ENCODE measurements at regions of chr14 and their contacts with region 1.

Region 1: GRCh38 chr14:95442633-95443021 is 73.8 kb downstream of the SYNE3 start:
- DNase-seq: peak; percentile 82
- H3K4me3 ChIP-seq: no peak overlapping the region
- H3K27ac ChIP-seq: no peak overlapping the region
- H3K4me1 ChIP-seq: no peaks in the 10 kb centered on the region
- H3K27me3 ChIP-seq: no peaks in the 10 kb centered on the region
- CTCF ChIP-seq: peak; percentile 90

Region 2: GRCh38 chr14:95413289-95414215 is 29.1 kb before region 1 on chr14:
- CTCF ChIA-PET with region 1: interaction called, 11 read pairs
- POLR2A ChIA-PET with region 1: no interaction called
- intact Hi-C with region 1: no loop called
- DNase-seq: no peak
- H3K4me3 ChIP-seq: no peak overlapping the region
- H3K27ac ChIP-seq: no peak overlapping the region
- H3K4me1 ChIP-seq: no peaks in the 10 kb centered on the region
- H3K27me3 ChIP-seq: no peaks in the 10 kb centered on the region
- CTCF ChIP-seq: no peak

Region 3: DNA sequence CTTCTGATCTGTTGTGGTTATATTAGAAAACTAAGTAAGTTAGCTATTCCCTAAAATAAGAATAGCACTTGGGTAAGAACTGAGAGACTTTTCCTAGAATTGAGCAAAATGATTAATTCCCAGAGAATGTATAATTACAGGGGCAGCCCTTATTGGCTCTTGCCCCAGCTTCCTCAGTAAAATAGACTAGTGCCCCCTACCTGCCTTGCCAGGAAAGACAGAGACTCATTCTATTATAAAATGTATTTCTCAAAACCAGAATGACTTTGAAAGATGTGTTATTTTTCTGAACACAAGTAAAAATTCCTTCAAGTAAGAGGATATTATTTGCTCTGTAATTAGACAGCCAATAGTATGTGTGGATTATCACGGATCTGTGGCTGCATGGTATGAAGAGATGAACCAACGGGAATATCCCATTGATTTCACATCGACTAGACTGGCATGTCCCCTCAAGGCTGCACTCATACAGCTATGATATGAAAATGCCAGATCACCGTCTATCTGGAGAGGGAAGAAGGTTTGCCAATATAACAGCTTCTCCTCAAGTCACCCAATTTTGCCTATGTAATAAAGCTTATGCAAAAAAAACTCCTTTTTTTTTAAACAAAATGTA is 84.9 kb after region 1 on chr14:
- CTCF ChIA-PET with region 1: interaction called, 24 read pairs
- POLR2A ChIA-PET with region 1: no interaction called
- intact Hi-C with region 1: loop called (anchors 2 kb)
- DNase-seq: peak; percentile 68
- H3K4me3 ChIP-seq: no peak overlapping the region
- H3K27ac ChIP-seq: no peak overlapping the region
- H3K4me1 ChIP-seq: peaks cover 51% of the 10 kb centered on the region
- H3K27me3 ChIP-seq: no peaks in the 10 kb centered on the region
- CTCF ChIP-seq: peak; percentile 87